ENCODE measurements at regions of chr18 and their contacts with region 1.

Region 1: DNA sequence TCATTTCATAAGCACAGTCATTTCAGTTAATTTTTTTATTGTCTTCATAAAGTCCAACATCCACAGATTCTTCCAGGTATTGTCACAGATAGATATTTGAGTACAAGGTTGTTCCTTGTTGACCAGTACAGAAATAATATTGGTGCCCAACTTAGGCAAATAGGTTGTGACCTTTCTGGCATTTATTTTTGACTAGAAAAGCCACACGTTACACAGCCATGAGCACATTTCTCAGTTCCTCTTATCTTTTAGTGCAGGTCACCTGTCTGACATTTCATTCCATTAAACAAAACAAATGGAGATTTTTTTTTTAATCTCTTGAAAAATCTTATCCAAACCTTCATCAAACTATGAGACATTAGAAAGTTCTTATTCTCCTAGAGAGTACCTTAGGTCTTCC is 428.8 kb downstream of the ZNF521 start:
- DNase-seq: no peak
- ATAC-seq: peak; percentile 90
- H3K4me3 ChIP-seq: no peak overlapping the region
- H3K27ac ChIP-seq: no peak overlapping the region
- H3K4me1 ChIP-seq: peaks cover 10% of the 10 kb centered on the region
- H3K27me3 ChIP-seq: no peaks in the 10 kb centered on the region
- CTCF ChIP-seq: no peak
- EP300 ChIP-seq: no peak
- POLR2A ChIP-seq: no peak
- RAD21 ChIP-seq: no peak

Region 2: DNA sequence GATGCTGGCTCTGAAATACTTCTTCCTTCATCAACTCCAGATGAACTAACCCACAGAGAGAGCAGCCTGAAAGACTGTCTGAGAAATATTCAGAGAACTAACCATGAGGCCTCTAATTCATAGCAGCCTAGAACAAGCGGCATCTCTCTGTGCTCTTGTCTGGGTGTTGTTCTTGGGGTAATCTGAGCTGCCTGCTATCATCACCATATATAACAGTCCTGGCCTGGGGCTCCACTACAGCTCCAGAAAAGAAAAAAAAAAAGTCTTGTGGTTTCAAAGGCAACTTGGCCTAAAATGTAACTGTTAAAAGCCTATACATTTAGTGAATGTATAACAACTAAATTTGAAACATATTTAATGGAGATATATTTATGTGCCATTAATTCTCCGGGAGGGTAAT is 168.6 kb before region 1 on chr18:
- CTCF ChIA-PET with region 1: no interaction called
- POLR2A ChIA-PET with region 1: no interaction called
- RAD21 ChIA-PET with region 1: no interaction called
- SMC1A ChIA-PET with region 1: no interaction called
- in situ Hi-C with region 1: no loop called
- intact Hi-C with region 1: no loop called
- DNase-seq: no peak
- ATAC-seq: no peak
- H3K4me3 ChIP-seq: no peak overlapping the region
- H3K27ac ChIP-seq: no peak overlapping the region
- H3K4me1 ChIP-seq: no peaks in the 10 kb centered on the region
- H3K27me3 ChIP-seq: no peaks in the 10 kb centered on the region
- CTCF ChIP-seq: no peak
- EP300 ChIP-seq: no peak
- POLR2A ChIP-seq: no peak
- RAD21 ChIP-seq: no peak

Region 3: DNA sequence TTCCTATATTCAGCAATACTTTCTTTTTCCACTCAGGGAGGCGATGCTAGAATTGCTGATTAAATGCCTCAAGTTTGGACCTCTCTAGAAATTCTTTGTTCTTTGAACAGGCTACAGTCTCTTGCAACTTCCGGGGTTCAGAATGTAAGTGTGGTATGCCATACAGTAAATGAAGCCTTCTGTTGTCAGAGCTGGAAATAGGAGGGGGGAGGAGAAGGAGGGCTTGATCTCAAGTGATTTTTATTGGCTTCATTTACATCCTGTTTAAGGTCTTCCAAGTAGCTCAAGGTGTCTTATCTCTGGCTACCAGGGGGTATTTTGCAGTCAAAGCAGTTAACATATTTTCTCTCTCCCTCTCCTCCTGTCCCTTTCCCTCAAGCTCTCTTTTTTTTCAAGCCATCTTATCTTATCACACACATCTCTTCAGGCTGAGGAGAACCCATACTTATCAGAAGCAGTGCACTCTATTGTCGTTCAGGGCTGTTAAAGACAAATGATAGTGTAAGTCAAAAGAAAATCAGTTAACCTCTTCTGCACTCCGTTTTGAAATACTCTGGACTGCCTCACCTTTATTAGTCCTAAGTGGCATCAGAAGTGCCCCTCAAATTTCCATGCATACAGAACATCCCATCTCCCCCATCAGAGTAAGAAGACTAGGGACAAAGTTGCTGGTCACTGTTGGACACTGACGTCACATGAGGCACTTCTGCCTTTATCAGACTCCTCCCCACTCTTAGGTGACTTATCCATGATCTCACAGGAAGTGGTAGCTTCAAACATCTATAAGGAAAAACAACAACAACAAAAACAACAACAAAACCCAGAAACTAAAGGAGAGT is 316.7 kb after region 1 on chr18:
- CTCF ChIA-PET with region 1: no interaction called
- POLR2A ChIA-PET with region 1: interaction called, 10 read pairs
- RAD21 ChIA-PET with region 1: no interaction called
- SMC1A ChIA-PET with region 1: no interaction called
- in situ Hi-C with region 1: no loop called
- intact Hi-C with region 1: no loop called
- DNase-seq: no peak
- ATAC-seq: no peak
- H3K4me3 ChIP-seq: no peak overlapping the region
- H3K27ac ChIP-seq: no peak overlapping the region
- H3K4me1 ChIP-seq: no peaks in the 10 kb centered on the region
- H3K27me3 ChIP-seq: no peaks in the 10 kb centered on the region
- CTCF ChIP-seq: no peak
- EP300 ChIP-seq: no peak
- POLR2A ChIP-seq: no peak
- RAD21 ChIP-seq: no peak

Measured in GM12878 (cell line).